PC-9 (cell line): ENCODE measurements at regions of chr2 and their contacts with region 1.

Region 1: GRCh38 chr2:109690822-109691547 is 76.8 kb downstream of the SOWAHC start:
- DNase-seq: peak; percentile 61 to 79
- H3K4me3 ChIP-seq: no peak overlapping the region
- H3K27ac ChIP-seq: peak overlapping the region; percentile 64
- H3K4me1 ChIP-seq: peaks cover 44% of the 10 kb centered on the region
- H3K27me3 ChIP-seq: no peaks in the 10 kb centered on the region
- CTCF ChIP-seq: no peak

Region 2: GRCh38 chr2:109482361-109482861 is 208.6 kb before region 1 on chr2:
- CTCF ChIA-PET with region 1: no interaction called
- POLR2A ChIA-PET with region 1: no interaction called
- intact Hi-C with region 1: no loop called
- DNase-seq: no peak
- H3K4me3 ChIP-seq: no peak overlapping the region
- H3K27ac ChIP-seq: no peak overlapping the region
- H3K4me1 ChIP-seq: no peaks in the 10 kb centered on the region
- H3K27me3 ChIP-seq: no peaks in the 10 kb centered on the region
- CTCF ChIP-seq: no peak

Region 3: GRCh38 chr2:109644576-109645275 is 46.3 kb before region 1 on chr2:
- CTCF ChIA-PET with region 1: no interaction called
- POLR2A ChIA-PET with region 1: no interaction called
- intact Hi-C with region 1: loop called (anchors 10 kb)
- DNase-seq: peak; percentile 40 to 62
- H3K4me3 ChIP-seq: peak overlapping the region; percentile 15; the same call in 1 of the 2 replicates
- H3K27ac ChIP-seq: peak overlapping the region; percentile 59
- H3K4me1 ChIP-seq: peaks cover 30% of the 10 kb centered on the region
- H3K27me3 ChIP-seq: no peaks in the 10 kb centered on the region
- CTCF ChIP-seq: no peak

Region 4: DNA sequence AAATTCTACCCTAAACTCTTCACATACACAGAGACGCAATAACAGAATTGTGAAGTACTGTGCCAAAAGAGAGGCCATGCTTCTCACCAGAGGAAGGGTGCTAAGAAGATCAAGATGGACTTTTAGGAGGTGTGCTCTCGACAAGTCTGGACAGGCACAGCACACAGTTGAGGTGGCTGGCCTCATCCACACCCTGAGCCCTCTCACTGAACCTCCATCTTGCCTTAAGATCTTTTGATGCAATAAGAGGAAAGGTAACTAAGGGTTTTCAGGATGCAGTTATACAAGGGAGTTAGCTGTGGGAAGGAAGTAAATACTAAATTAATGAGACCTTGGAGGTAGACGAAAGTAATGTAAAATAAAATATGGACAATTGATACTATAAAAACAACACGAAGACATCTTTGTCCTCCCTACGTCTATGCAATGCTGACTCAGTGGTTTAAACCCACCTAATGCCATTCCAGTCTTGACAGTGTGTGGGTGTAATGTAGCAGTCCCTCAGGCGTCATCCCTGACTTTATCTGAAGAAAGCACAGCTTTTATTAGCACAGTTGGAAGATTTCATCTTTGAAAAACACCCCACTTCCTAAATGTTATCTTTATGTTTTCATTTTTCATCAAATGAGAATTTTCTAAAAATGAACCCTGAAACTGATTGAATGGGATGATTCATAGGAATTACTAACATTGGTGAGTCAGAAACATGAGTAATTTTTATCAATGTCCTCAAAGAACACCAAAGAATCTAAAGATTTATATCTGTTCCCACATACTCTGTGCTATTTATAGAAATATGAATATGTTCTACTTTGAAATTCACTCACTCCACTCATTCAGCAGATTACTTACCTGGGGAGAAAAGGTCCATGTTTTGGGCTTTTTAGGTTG is 458.6 kb after region 1 on chr2:
- CTCF ChIA-PET with region 1: interaction called, 12 read pairs
- POLR2A ChIA-PET with region 1: no interaction called
- intact Hi-C with region 1: no loop called
- DNase-seq: peak; percentile 34 to 92
- H3K4me3 ChIP-seq: peak overlapping the region; percentile 14; the same call in 1 of the 2 replicates
- H3K27ac ChIP-seq: peak overlapping the region; percentile 95
- H3K4me1 ChIP-seq: peaks cover 24% of the 10 kb centered on the region
- H3K27me3 ChIP-seq: no peaks in the 10 kb centered on the region
- CTCF ChIP-seq: no peak